CD4-positive, alpha-beta memory T cell (primary cell): ENCODE measurements at regions of chr11 and their contacts with region 1.

Region 1: GRCh38 chr11:3849297-3849874 is 6.1 kb upstream of the STIM1 start:
- DNase-seq: peak; percentile 57 to 70 (median 66)
- H3K4me3 ChIP-seq: no peak overlapping the region
- H3K4me3 Mint-ChIP-seq: peak overlapping the region in 1 of 8 donors; percentile 21
- H3K27ac ChIP-seq: no peak overlapping the region
- H3K27ac Mint-ChIP-seq: peak overlapping the region; percentile 4 to 76 (median 62)
- H3K4me1 ChIP-seq: peaks cover 30% of the 10 kb centered on the region
- H3K4me1 Mint-ChIP-seq: peaks cover 25 to 38% (median 30%) of the 10 kb centered on the region in 4 donors
- H3K27me3 ChIP-seq: no peaks in the 10 kb centered on the region
- H3K27me3 Mint-ChIP-seq: no peaks in the 10 kb centered on the region

Region 2: GRCh38 chr11:3775736-3776406 is 73.5 kb before region 1 on chr11:
- CTCF ChIA-PET with region 1: no interaction called
- POLR2A ChIA-PET with region 1: no interaction called
- intact Hi-C with region 1: no loop called
- DNase-seq: no peak
- H3K4me3 ChIP-seq: no peak overlapping the region
- H3K4me3 Mint-ChIP-seq: no peak overlapping the region
- H3K27ac ChIP-seq: no peak overlapping the region
- H3K27ac Mint-ChIP-seq: no peak overlapping the region
- H3K4me1 ChIP-seq: no peaks in the 10 kb centered on the region
- H3K4me1 Mint-ChIP-seq: peaks cover 0 to 3% (median 1%) of the 10 kb centered on the region in 4 donors
- H3K27me3 ChIP-seq: no peaks in the 10 kb centered on the region
- H3K27me3 Mint-ChIP-seq: no peaks in the 10 kb centered on the region

Region 3: DNA sequence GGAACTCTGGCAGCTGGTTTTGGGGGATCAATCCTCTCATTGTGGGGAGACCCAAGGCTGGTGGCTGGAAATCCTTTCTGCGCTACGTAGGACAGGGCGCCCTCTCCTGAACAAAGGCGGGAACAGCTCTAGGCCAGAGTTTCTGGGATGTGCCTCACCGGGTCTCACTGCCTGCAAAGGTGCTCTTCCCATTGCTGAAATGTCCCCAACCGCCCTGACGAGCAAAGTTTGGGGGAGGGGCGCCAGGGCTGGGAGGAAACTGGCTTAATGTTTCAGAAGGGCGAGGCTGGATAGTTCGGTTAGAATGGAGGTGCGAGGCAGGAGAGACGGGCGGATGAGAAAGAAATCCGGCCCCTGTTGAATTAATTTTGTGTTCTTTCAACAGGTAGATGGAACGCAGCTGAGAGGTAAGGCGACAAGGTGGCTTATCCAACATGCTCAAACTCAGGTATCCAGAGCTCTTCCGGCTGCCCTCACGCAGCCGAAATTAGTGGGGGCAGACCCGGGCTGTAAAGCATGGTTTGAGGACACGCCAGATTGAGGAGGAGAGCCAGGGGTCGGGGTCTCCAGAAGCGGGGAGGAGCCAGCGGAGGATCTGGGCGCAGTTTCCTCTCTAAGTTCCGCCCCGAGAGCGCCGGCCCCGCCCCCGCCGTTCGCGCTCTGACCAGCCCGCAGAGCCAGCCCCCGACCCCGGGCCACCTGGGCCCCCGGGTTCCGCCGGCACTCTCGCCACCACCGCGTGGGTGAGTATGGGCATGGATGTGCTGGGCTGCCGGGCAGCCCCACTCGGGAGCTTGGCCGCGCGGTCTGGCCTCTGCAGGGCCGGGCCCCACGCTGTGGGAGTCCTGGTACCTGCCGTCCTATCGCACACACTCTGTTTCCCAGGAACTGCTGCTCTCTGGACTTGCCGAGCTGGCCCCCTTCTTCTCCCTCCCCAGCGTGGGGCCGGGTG is 41.2 kb before region 1 on chr11 and contains the start of gene PGAP2:
- CTCF ChIA-PET with region 1: interaction called, 24 read pairs
- POLR2A ChIA-PET with region 1: interaction called, 27 read pairs
- intact Hi-C with region 1: no loop called
- DNase-seq: peak; percentile 42 to 62 (median 48)
- H3K4me3 ChIP-seq: peak within 1 kb of the TSS; percentile 81 to 85
- H3K4me3 Mint-ChIP-seq: peak within 1 kb of the TSS; percentile 92 to 99 (median 97)
- H3K27ac ChIP-seq: peak within 1 kb of the TSS; percentile 68
- H3K27ac Mint-ChIP-seq: peak within 1 kb of the TSS; percentile 82 to 99 (median 95)
- H3K4me1 ChIP-seq: peaks cover 10% of the 10 kb centered on the region
- H3K4me1 Mint-ChIP-seq: peaks cover 6 to 18% (median 14%) of the 10 kb centered on the region in 4 donors
- H3K27me3 ChIP-seq: no peaks in the 10 kb centered on the region
- H3K27me3 Mint-ChIP-seq: no peaks in the 10 kb centered on the region
- total RNA-seq, gene PGAP2: 18.4 to 20.7 TPM

Region 4: GRCh38 chr11:3929649-3930048 is 80.3 kb after region 1 on chr11:
- CTCF ChIA-PET with region 1: interaction called, 24 read pairs
- POLR2A ChIA-PET with region 1: interaction called, 9 read pairs
- intact Hi-C with region 1: no loop called
- DNase-seq: no peak
- H3K4me3 ChIP-seq: no peak overlapping the region
- H3K4me3 Mint-ChIP-seq: no peak overlapping the region
- H3K27ac ChIP-seq: no peak overlapping the region
- H3K27ac Mint-ChIP-seq: peak overlapping the region in 2 of 7 donors; percentile 37 to 69
- H3K4me1 ChIP-seq: peaks cover 39% of the 10 kb centered on the region
- H3K4me1 Mint-ChIP-seq: peaks cover 41 to 70% (median 48%) of the 10 kb centered on the region in 4 donors
- H3K27me3 ChIP-seq: no peaks in the 10 kb centered on the region
- H3K27me3 Mint-ChIP-seq: no peaks in the 10 kb centered on the region

Region 5: GRCh38 chr11:3947061-3947460 is 97.7 kb after region 1 on chr11:
- CTCF ChIA-PET with region 1: interaction called, 48 read pairs
- POLR2A ChIA-PET with region 1: interaction called, 229 read pairs
- intact Hi-C with region 1: loop called (anchors 1 kb)
- DNase-seq: peak; percentile 72 to 81 (median 77)
- H3K4me3 ChIP-seq: peak overlapping the region; percentile 19 to 45
- H3K4me3 Mint-ChIP-seq: peak overlapping the region; percentile 72 to 86 (median 80)
- H3K27ac ChIP-seq: peak overlapping the region; percentile 68
- H3K27ac Mint-ChIP-seq: peak overlapping the region; percentile 89 to 98 (median 94)
- H3K4me1 ChIP-seq: peaks cover 99% of the 10 kb centered on the region
- H3K4me1 Mint-ChIP-seq: peaks cover 87 to 97% (median 92%) of the 10 kb centered on the region in 4 donors
- H3K27me3 ChIP-seq: no peaks in the 10 kb centered on the region
- H3K27me3 Mint-ChIP-seq: no peaks in the 10 kb centered on the region

Region 6: GRCh38 chr11:3984896-3985295 is 135.5 kb after region 1 on chr11:
- CTCF ChIA-PET with region 1: interaction called, 27 read pairs
- POLR2A ChIA-PET with region 1: interaction called, 14 read pairs
- intact Hi-C with region 1: loop called (anchors 1 kb)
- DNase-seq: peak in 2 of 5 donors; percentile 9 to 17
- H3K4me3 ChIP-seq: no peak overlapping the region
- H3K4me3 Mint-ChIP-seq: peak overlapping the region in 1 of 8 donors; percentile 66
- H3K27ac ChIP-seq: no peak overlapping the region
- H3K27ac Mint-ChIP-seq: peak overlapping the region in 5 of 7 donors; percentile 1 to 95 (median 83)
- H3K4me1 ChIP-seq: peaks cover 68% of the 10 kb centered on the region
- H3K4me1 Mint-ChIP-seq: peaks cover 61 to 91% (median 78%) of the 10 kb centered on the region in 4 donors
- H3K27me3 ChIP-seq: no peaks in the 10 kb centered on the region
- H3K27me3 Mint-ChIP-seq: no peaks in the 10 kb centered on the region

Region 7: DNA sequence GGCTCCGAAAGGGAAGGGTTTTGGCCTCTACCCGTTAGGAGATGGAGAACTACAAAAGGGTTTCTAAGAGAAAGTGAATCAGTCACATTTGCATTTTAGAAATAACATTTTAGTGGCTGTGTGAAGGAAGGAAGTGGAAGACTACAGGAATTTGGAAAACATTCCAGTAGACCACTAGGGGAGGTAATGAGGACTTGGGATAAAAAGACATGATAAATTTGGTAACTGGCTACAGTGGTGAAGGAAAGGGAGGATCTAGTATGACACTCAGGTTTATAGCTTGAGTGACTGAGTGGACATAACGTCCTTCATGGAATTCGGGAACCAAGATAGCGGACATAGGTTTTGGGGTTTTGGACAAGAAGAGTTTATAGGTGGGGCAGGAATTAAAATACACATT is 238.2 kb after region 1 on chr11:
- CTCF ChIA-PET with region 1: interaction called, 27 read pairs
- POLR2A ChIA-PET with region 1: interaction called, 36 read pairs
- intact Hi-C with region 1: loop called (anchors 5 kb)
- DNase-seq: no peak
- H3K4me3 ChIP-seq: no peak overlapping the region
- H3K4me3 Mint-ChIP-seq: peak overlapping the region in 2 of 8 donors; percentile 23 to 36
- H3K27ac ChIP-seq: no peak overlapping the region
- H3K27ac Mint-ChIP-seq: peak overlapping the region; percentile 62 to 99 (median 93)
- H3K4me1 ChIP-seq: peaks cover 57% of the 10 kb centered on the region
- H3K4me1 Mint-ChIP-seq: peaks cover 49 to 74% (median 57%) of the 10 kb centered on the region in 4 donors
- H3K27me3 ChIP-seq: no peaks in the 10 kb centered on the region
- H3K27me3 Mint-ChIP-seq: no peaks in the 10 kb centered on the region